ENCODE measurements at regions of chr12 and their contacts with region 1.

Region 1: DNA sequence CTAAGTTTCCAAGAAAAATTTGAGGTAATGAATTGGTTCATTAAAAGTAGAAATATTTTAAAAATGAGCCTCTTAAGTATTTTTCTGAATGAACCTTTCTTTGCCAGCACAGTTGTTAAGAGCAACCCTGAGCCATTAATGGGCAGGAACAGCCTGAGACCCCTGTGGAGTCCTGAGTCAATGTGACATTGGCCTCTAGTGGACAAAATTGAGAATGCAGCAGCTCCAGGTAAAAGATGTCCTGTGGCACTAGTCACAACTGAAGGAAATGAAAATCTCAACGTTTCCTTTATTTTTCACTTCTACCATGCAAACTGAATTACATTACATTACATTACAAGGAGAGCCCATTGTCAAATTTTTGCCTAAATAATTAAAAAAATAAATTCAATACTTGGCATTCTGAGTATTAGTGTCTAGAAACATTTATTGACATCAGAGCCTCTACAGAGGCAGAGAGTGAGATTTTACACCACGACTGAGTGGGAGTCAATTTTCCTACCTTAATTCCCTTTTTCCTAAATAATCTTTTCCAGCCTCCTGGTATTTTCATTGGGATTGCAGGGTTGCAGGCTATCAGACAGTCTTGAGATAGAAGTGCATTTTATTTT is 135.7 kb downstream of the PPM1H start:
- DNase-seq: peak; percentile 73 to 86 (median 82)
- H3K4me3 ChIP-seq: no peak overlapping the region
- H3K27ac ChIP-seq: no peak overlapping the region
- H3K4me1 ChIP-seq: no peaks in the 10 kb centered on the region
- H3K27me3 ChIP-seq: no peaks in the 10 kb centered on the region

Region 2: DNA sequence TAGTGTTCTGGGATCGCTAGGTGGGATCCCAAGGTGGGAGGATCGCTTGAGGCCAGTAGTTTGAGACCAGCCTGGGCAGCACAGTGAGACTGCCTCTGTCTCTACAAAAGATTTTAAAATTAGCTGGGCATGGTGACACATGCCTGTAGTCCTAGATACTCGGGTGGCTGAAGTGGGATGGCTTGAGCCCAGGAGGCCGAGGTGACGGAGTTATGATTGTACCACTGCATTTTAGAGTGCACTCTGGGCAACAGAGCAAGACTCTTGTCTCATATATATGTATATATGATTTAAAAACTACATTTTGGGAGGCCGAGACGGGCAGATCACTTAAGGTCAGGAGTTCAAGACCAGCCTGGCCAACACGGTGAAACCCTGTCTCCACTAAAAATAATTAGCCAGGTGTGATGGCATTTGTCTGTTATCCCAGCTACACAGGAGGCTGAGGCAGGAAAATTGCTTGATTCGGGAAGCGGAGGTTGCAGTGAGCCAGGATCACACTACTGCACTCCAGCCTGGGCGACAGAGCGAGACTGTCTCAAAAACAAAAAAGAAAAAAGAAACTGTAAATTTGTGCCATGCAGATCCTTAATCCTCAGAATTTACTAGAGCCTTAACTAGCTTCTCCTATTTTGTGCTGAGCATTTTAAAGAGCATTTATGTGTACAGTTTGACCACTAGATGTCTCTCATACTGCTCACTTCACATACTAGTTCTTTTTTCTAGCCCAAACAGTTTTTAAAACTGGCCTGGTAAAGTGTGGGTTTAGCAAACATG is 217.8 kb before region 1 on chr12:
- CTCF ChIA-PET with region 1: interaction called, 165 read pairs
- POLR2A ChIA-PET with region 1: no interaction called
- DNase-seq: peak; percentile 77 to 86 (median 84)
- H3K4me3 ChIP-seq: no peak overlapping the region
- H3K27ac ChIP-seq: no peak overlapping the region
- H3K4me1 ChIP-seq: peaks cover 0 to 15% (median 11%) of the 10 kb centered on the region in 4 experiments
- H3K27me3 ChIP-seq: no peaks in the 10 kb centered on the region

Region 3: GRCh38 chr12:62785941-62786559 is 13.2 kb before region 1 on chr12:
- CTCF ChIA-PET with region 1: interaction called, 14 read pairs
- POLR2A ChIA-PET with region 1: no interaction called
- DNase-seq: peak; percentile 38 to 71 (median 58)
- H3K4me3 ChIP-seq: no peak overlapping the region
- H3K27ac ChIP-seq: no peak overlapping the region
- H3K4me1 ChIP-seq: peaks cover 1 to 26% (median 18%) of the 10 kb centered on the region in 4 experiments
- H3K27me3 ChIP-seq: no peaks in the 10 kb centered on the region

Region 4: GRCh38 chr12:62983599-62984022 is 184.4 kb after region 1 on chr12:
- CTCF ChIA-PET with region 1: interaction called, 14 read pairs
- POLR2A ChIA-PET with region 1: no interaction called
- DNase-seq: peak; percentile 58 to 73 (median 63)
- H3K4me3 ChIP-seq: no peak overlapping the region
- H3K27ac ChIP-seq: no peak overlapping the region
- H3K4me1 ChIP-seq: no peaks in the 10 kb centered on the region
- H3K27me3 ChIP-seq: no peaks in the 10 kb centered on the region

Region 5: DNA sequence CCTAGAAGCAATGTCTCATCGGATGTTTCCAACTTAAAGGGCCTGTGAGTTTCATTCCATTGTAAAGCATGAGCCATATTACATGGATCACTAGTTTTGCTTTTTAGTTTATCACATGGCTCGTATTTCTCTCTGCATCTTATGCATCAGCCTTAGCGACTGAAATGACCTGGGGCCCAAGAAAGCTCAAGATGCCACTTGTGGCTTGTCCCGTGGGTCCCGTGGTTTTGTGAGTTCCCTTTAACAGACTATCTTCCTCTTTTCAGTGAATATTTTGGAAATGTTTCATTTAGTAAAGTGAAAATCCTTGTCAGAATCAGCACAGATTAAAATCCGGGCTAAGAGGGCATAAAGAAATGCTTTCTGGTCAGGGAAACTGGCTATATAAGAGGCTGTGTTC is 221.9 kb after region 1 on chr12:
- CTCF ChIA-PET with region 1: no interaction called
- POLR2A ChIA-PET with region 1: no interaction called
- DNase-seq: peak; percentile 45 to 88 (median 87)
- H3K4me3 ChIP-seq: no peak overlapping the region
- H3K27ac ChIP-seq: peak overlapping the region in 1 of 2 experiments; percentile 15
- H3K4me1 ChIP-seq: peaks cover 0 to 15% (median 4%) of the 10 kb centered on the region in 4 experiments
- H3K27me3 ChIP-seq: no peaks in the 10 kb centered on the region

Measured in common myeloid progenitor, CD34-positive (primary cell).